ENCODE measurements at regions of chr10 and their contacts with region 1.

Region 1: DNA sequence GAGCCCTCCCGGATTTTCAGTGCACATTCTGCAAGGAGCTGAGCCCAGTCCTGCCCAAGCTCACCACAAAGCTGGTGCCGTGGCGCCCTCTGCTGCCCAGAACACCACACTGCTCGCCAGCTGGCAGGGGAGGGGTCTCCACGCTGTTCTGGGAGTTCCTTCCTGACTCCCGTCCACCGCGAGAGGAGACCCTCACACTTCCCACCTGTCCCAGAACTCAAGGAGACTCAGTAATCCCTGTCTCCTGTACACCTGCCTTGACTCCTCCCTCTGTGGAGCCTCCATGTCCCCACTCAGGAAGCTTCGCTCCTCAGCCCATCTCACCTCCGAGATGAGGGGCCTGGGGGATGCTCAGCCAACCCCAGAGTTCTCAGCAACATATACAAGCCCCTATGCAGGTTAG is 11.3 kb downstream of the C10orf105 start:
- DNase-seq: peak; percentile 84
- CTCF ChIP-seq: peak; percentile 96

Region 2: GRCh38 chr10:71319042-71319799 is 389.1 kb before region 1 on chr10 and contains the start of gene SLC29A3:
- in situ Hi-C with region 1: loop called (anchors 10 kb)
- DNase-seq: peak; percentile 96
- CTCF ChIP-seq: peak; percentile 82

Region 3: DNA sequence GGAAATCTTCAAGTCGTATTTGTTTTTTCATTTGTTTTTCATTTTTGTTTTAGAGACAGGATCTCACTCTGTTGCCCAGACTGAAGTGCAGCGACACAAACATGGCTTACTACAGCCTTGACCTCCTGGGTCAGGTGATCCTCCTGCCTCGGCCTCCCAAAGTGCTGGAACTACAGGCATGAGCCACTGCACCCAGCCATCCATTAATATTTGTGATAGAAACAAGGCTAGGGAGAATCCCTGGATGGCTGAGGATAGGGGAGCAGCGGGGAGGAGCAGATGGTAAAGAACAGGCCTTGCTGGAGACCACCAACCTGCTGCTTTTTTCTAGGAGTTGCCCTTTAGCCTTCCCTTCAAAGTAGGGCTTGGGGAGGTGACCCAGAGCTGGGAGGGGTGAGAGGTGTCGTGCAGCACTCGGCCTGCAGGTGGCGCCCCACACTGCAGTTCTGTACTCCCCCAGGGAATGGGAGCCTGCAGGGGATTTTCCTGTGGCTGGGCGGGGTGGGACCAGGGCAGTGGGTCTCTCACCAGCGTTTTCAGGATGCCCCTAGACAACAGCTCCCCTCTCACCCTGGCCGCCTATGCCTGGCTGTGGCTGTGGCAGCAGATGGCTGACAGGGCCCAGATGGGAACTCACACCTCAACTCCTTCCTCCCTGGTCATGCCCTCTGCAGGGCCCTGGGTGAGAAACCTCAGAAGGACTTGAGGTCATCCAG is 324.2 kb before region 1 on chr10:
- in situ Hi-C with region 1: loop called (anchors 10 kb)
- DNase-seq: peak; percentile 82
- CTCF ChIP-seq: peak; percentile 96

Region 4: GRCh38 chr10:72123616-72124015 is 415.3 kb after region 1 on chr10:
- in situ Hi-C with region 1: no loop called
- DNase-seq: no peak
- CTCF ChIP-seq: no peak